BJ (cell line): ENCODE measurements at regions of chr11 and their contacts with region 1.

Region 1: GRCh38 chr11:61446211-61446651 is 16.3 kb downstream of the SDHAF2 start:
- DNase-seq: peak; percentile 82
- H3K4me3 ChIP-seq: no peak overlapping the region
- H3K27me3 ChIP-seq: no peaks in the 10 kb centered on the region
- CTCF ChIP-seq: peak; percentile 97

Region 2: GRCh38 chr11:61460474-61460881 is 14.2 kb after region 1 on chr11:
- CTCF ChIA-PET with region 1: interaction called, 35 read pairs
- POLR2A ChIA-PET with region 1: no interaction called
- DNase-seq: no peak
- H3K4me3 ChIP-seq: no peak overlapping the region
- H3K27me3 ChIP-seq: no peaks in the 10 kb centered on the region
- CTCF ChIP-seq: no peak

Region 3: DNA sequence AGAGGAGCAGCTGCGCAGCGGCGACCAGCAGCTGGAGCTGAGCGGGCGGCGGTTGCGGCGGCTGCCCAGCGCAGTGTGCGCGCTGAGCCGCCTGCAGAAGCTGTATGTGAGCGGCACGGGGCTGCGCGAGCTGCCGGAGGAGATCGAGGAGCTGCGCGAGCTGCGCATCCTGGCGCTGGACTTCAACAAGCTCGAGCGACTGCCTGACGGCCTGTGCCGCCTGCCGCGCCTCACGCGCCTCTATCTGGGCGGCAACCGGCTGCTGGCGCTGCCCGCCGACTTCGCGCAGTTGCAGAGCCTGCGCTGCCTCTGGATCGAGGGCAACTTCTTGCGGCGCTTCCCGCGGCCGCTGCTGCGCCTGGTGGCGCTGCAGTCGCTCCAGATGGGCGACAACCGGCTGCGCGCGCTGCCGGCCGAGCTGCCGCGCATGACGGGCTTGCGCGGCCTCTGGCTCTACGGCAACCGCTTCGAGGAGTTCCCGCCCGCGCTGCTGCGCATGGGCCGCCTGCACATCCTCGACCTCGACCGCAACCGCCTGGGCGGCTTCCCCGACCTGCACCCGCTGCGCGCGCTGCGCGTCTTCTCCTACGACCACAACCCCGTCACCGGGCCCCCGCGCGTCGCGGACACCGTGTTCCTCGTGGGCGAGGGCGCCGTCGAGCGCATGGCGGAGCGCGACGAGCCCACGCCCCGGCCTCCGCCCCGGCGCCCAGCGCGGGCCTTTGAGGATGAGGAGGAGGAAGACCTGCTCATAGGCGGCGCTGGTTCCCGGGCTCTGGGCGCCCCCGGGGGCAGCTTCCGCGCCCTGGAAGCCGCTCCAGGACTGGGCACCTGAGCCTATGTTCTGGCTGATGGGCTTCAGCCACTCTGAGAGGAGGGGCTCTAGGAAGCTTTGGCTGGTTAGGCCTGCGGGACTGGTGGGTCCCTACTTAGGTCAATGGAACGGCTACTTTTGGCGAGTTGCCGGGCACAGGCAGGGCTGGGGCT is 63.1 kb after region 1 on chr11:
- CTCF ChIA-PET with region 1: interaction called, 200 read pairs
- POLR2A ChIA-PET with region 1: no interaction called
- DNase-seq: peak; percentile 19
- H3K4me3 ChIP-seq: peak overlapping the region; percentile 24
- H3K27me3 ChIP-seq: peaks cover 39% of the 10 kb centered on the region
- CTCF ChIP-seq: peak; percentile 38; the same call in 1 of the 2 replicates

Region 4: DNA sequence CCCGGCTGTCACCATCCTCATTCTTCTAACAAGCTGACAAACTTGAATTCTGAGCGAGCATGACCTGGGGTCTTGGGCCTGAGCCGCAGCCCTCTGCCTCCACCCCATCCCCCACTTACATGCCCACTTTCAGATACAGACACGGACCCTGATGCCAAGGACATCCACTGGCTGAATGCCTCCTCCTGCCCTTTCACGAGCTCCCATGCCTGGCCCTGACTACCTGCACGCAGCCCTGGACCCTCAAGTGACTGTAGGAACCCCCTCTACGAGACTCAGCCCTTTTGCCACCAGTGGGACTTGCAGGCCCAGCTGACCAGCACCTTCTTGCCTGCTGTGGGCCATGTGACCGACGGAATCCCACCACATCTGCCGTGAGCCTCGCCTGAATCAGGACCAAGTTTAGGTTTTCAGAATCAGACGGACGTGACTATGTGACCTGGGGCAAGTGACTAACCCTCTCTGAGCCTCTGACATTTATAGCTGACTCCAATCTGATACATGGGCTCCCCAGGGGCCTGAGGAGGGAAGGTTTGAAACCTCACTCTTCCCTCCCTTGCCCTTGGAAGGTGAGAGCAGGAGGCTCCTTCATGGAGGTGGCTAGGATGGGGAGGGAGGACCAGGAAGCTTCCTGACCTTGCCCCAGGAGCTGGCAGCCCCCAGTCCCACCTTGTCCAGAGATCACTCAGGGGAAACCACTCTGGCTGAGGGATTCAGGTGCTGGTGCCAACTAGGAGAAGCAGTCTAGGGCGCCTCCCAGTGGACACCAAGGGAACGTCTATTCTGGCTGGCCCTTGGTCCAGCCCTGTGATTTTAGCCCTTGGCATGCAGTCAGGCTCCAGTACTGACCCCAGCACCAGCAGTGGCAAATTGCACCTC is 181.6 kb after region 1 on chr11:
- CTCF ChIA-PET with region 1: interaction called, 84 read pairs
- POLR2A ChIA-PET with region 1: no interaction called
- DNase-seq: no peak
- H3K4me3 ChIP-seq: no peak overlapping the region
- H3K27me3 ChIP-seq: peaks cover 3% of the 10 kb centered on the region
- CTCF ChIP-seq: peak; percentile 92